Activated CD4-positive, alpha-beta T cell treated with anti-CD3 and anti-CD28 coated beads, Interleukin-2, amount 10 ng/mL, durations not matched to agents 24 days and 14 days (primary cell): ENCODE measurements at regions of chr17 and their contacts with region 1.

Region 1: DNA sequence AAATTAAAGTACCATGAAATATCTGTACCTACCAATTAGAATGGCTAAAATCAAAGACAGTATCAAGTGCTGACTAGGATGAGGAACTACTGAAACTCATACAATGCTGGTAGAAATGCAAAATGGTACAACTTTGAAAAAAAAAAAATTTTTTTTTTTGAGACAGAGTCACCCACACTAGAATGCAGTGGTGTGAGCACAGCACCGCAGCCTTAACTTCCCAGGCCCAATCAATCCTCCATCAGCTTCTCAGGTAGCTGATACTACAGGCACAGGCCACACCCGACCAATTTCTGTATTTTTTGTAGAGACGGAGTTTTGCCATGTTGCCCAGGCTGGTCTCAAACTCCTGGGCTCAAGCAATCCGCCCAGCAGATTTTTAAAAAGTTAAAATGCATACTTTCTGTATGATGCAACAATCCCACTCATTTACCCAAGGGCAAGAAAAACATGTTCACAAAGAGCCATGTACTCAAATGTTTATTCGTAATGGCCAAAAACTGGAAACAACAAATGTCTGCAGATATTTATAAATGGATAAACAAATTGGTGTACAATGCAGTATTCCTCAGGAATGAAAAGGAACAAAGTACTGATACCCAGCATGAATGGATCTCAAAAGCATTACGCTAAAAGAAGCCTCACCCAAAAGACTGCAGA is 8.7 kb downstream of the SMURF2 start:
- DNase-seq: no peak
- H3K4me3 Mint-ChIP-seq: no peak overlapping the region
- H3K27ac Mint-ChIP-seq: no peak overlapping the region
- H3K4me1 Mint-ChIP-seq: peaks cover 26% of the 10 kb centered on the region
- H3K27me3 Mint-ChIP-seq: no peaks in the 10 kb centered on the region

Region 2: DNA sequence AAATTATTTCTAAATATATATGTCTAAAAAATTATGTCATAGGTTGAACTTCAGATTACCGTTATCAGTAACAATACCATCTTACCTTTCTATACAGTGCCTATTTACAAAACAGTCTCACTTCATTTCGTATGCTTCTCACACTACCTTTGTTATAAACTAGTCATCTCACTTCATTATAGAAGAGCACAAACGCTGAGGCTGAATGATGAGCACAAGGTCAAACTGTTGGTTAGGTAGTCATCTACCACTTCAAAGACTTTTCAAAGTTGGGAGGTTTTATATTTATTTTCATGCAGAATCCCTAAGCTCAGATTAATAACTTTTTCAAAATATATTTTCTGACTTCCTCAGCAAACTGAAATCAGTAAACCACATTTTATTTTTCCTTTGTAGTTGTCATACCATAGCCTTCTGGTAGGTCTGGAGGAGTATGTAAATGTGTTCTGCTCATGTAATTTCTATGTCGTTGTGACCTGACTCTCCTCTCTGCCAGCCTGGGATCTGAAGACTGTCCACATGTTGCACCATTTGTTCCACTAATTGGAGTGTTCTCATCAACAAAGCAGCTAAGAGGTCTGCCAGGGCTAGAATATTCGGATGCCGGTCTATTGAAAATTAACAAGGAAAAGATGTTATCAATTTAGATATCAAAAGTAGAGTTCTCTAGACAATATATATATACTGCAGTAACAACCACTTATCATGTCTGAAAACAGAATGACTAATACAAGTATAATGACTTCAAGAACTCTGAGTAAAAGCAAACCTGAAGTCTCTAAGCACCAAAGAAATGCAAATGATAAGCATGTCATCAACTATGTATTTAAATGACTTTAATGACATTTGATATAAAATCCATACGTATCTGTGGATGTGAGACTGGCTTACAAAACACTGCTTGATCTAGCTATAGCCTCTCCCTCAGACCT is 72.8 kb before region 1 on chr17:
- intact Hi-C with region 1: loop called (anchors 1 kb)
- DNase-seq: no peak
- H3K4me3 Mint-ChIP-seq: peak overlapping the region; percentile 33
- H3K27ac Mint-ChIP-seq: peak overlapping the region; percentile 96
- H3K4me1 Mint-ChIP-seq: peaks cover 14% of the 10 kb centered on the region
- H3K27me3 Mint-ChIP-seq: no peaks in the 10 kb centered on the region